ENCODE measurements at regions of chr6 and their contacts with region 1.

Region 1: DNA sequence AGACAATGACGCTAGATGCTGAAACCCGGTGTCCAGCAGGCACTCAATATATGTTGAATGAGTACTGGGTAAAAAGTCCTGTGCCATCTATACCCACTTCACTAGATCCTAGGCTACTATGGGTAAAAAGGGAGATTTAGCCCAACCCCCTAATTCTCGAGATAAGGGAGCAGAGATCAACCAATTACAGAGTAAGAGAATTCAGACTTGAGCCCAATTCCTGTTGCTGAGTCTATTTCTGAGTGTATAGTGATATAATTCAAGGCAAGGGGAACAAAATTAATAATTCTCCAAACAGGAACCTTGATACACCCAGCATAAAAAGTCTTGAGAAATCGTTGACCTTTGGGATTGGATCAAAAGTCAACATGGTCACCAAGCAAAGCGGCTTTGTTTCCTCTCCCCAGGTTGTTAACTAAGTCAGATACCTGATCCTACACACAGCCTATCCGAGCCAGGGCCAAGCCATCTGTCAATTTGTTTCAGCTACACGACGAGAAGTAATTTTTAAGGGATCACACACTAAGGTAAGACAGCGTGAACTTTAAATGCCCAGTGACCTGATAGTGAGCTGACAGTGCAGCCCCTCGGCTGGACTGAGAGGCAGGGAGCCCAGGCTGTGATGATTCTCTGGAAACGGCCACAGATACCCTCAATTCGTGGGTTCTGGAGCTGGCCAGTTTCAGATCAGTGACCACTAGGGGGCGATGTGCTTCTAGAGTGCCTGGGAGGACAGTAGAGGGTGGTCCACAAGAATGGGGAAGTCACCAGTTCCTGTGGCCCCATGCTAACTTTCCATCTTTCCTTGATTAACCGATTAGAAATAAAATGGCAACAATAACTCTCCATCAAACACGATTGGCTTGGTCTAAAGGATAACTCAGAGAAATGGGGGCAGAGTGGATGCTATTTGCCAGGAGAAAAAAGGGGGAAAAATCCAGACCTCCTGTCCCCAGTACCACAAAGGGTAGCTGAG is 46.2 kb downstream of the SLC22A23 start:
- DNase-seq: peak in 1 of 2 experiments; percentile 24
- H3K4me3 ChIP-seq: no peak overlapping the region
- H3K27ac ChIP-seq: no peak overlapping the region
- H3K4me1 ChIP-seq: peaks cover 42% of the 10 kb centered on the region
- H3K27me3 ChIP-seq: no peaks in the 10 kb centered on the region
- CTCF ChIP-seq: peak; percentile 71

Region 2: GRCh38 chr6:3277851-3278416 is 132.7 kb before region 1 on chr6:
- CTCF ChIA-PET with region 1: no interaction called
- POLR2A ChIA-PET with region 1: no interaction called
- intact Hi-C with region 1: loop called (anchors 5 kb)
- DNase-seq: no peak
- H3K4me3 ChIP-seq: no peak overlapping the region
- H3K27ac ChIP-seq: no peak overlapping the region
- H3K4me1 ChIP-seq: no peaks in the 10 kb centered on the region
- H3K27me3 ChIP-seq: no peaks in the 10 kb centered on the region
- CTCF ChIP-seq: no peak

Region 3: DNA sequence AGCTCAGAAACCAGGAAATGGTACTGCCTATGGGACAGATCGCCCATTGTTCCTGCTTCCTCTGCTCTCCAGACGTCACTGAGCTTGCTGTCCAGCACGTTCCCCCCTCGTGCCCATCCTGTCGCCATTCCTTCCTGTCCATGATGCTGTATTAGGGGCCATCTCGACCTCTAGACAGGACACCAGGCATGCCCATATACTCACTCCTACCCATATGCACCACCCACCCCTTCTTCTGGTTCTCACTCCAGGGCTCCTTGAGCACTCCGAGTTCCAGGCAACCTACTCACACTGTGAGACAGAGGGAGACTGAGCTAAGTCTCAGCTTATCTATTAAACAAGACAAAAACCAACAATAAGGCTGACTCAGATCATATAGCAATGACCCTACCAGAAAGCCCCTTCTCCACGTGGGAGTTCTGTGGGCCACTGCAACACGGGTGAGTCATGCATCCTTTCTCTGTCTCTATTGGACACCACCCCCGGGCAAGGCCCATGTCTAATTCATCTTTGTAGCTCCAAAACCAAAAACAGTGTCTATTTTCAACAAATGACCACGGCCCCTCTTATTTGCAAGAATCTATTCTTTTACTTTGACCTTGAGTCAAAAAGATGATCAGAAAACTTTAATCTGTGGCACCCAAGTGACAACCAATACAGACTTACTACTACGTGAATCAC is 86.3 kb before region 1 on chr6:
- CTCF ChIA-PET with region 1: no interaction called
- POLR2A ChIA-PET with region 1: no interaction called
- intact Hi-C with region 1: no loop called
- DNase-seq: no peak
- H3K4me3 ChIP-seq: no peak overlapping the region
- H3K27ac ChIP-seq: no peak overlapping the region
- H3K4me1 ChIP-seq: no peaks in the 10 kb centered on the region
- H3K27me3 ChIP-seq: no peaks in the 10 kb centered on the region
- CTCF ChIP-seq: no peak

Region 4: GRCh38 chr6:3383525-3383924 is 27.1 kb before region 1 on chr6:
- CTCF ChIA-PET with region 1: interaction called, 5 read pairs
- POLR2A ChIA-PET with region 1: no interaction called
- intact Hi-C with region 1: loop called (anchors 5 kb)
- DNase-seq: peak in 1 of 2 experiments; percentile 62
- H3K4me3 ChIP-seq: no peak overlapping the region
- H3K27ac ChIP-seq: peak overlapping the region; percentile 64; the same call in 1 of the 2 replicates
- H3K4me1 ChIP-seq: peaks cover 45% of the 10 kb centered on the region
- H3K27me3 ChIP-seq: no peaks in the 10 kb centered on the region
- CTCF ChIP-seq: no peak

Region 5: DNA sequence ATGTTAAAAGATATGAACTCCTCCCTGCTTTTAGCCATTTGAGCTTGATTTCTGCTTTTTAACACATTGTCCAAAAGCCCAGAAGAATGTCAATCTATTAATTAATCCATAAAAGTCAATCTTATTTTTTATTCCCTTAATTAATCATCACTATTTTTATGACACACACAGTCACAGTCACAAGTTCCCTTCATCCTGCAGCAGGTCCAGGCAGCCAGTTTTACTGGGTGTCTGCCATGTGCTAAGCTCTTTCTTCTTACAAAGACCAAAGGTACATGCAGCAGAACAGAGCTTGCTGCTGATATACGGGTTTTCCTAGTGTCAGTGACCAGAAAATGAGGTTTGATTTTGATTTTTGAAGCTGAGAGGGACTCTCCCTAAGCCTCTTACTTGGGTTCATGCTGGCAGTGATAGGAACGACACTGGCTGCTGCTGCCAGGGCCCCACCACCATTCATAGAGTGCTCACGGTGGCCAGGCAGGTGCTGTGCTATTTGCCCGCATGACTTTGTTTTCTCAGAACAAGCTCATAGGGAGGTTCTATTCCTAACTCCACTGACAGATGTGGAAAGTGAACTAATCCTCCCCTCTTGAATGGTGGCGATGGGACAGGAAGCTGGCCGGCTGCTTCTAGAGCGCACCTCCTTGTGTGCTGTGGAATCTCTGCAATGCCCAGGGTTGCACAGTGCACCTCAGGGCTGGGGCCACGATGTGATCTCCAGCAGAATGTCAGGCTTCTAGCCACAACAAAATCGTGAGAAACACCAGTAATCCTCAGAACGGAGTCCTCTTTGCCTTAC is 99.7 kb after region 1 on chr6:
- CTCF ChIA-PET with region 1: no interaction called
- POLR2A ChIA-PET with region 1: interaction called, 5 read pairs
- intact Hi-C with region 1: loop called (anchors 5 kb)
- DNase-seq: no peak
- H3K4me3 ChIP-seq: no peak overlapping the region
- H3K27ac ChIP-seq: no peak overlapping the region
- H3K4me1 ChIP-seq: peaks cover 34% of the 10 kb centered on the region
- H3K27me3 ChIP-seq: no peaks in the 10 kb centered on the region
- CTCF ChIP-seq: no peak

Region 6: DNA sequence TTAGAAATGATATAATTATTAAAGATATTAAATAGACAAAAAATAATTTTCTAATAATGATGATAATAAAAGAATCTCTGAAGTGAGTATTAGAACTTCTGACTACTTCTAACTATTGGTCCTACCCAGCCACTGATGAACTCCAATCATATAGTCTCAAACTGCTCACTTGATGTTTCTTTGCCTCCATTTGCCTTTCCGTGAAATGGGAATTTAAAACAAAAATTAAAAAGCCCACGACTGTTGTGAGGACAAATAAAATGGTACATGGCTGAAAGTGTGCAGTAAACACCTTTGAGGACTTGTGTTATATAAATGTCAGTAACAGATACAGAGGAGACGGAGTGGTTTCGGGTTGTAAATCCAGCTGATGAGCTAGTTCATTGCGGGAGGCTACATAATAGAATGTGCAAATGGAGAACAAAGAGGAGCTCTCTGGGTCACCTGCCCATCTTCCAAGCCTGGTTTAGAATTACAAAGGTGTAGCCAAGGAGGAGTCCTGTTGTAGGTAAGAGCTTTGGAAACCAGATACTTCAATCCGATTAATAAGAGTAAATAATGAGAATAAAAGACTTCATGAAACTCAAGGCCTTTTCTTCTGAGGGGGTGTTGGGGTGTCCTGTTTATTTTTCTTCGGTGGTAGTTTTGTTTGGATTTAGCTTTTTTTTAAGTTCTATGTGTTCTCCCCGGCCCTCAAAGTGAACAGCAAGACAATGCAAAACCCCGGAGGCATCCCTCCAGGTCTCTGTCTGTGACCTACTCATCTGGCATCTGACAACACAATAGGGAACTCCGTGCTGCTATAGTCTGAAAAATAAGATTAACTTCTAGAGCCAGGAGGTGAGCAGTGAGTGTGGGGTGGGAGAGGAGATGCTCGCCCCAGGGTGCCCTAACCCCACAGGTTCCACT is 345.2 kb after region 1 on chr6:
- CTCF ChIA-PET with region 1: no interaction called
- POLR2A ChIA-PET with region 1: interaction called, 12 read pairs
- intact Hi-C with region 1: no loop called
- DNase-seq: no peak
- H3K4me3 ChIP-seq: no peak overlapping the region
- H3K27ac ChIP-seq: no peak overlapping the region
- H3K4me1 ChIP-seq: no peaks in the 10 kb centered on the region
- H3K27me3 ChIP-seq: no peaks in the 10 kb centered on the region
- CTCF ChIP-seq: no peak